T-cell (primary cell): ENCODE measurements at regions of chr7 and their contacts with region 1.

Region 1: DNA sequence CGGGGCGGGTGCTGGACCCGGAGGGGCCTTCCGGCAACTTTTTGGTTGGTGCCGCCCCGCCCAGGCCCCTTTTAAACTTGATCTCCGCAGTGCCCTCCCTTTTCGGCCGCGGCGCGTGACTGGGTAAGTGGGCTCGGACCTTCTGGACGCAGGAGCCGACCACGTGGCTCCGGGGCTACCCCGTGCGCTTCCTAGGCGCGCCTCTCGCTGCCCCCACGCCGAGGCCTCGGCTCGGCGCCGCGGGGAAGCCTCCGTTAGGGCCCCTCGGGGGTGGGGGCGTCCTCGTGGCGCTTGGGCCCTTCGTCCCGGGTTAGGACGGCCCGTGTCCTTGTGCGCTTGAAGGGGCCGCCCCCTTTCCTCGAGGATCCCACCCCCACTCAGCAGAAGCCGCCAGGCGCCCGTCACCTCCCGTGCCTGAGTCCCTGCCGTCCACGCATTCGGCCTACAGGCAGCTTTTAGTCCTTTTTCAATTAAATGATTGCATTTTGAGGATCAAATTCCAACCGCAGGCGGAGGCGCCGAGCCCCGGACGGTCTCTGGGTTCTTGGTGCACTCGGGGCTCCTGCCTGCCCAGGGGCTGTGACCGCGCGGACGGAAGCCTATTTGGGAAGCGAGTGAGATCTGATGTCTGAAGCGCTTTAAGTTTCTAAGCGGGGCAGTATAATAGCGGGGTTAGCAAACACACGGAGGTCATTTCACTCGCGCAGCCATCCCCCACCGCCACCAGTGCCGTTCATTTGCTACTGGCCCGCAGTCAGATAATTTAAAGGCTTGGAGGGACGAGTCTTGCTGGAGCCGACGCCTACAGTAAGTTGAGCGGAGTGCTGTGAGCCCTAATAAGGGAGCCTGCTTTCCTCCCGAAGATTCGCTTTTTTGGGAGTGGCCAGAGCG is 31.8 kb upstream of the TOMM7 start:
- DNase-seq: peak in 33 of 35 experiments; percentile 22 to 78 (median 67)
- ATAC-seq: peak; percentile 38 to 59 (median 54)
- H3K4me3 ChIP-seq: peak overlapping the region; percentile 63 to 81
- H3K4me3 Mint-ChIP-seq: peak overlapping the region; percentile 91 to 95 (median 92)
- H3K27ac ChIP-seq: peak overlapping the region; percentile 73
- H3K27ac Mint-ChIP-seq: peak overlapping the region; percentile 84 to 90
- H3K4me1 ChIP-seq: peaks cover 4 to 25% of the 10 kb centered on the region in 2 experiments
- H3K4me1 Mint-ChIP-seq: peaks cover 20 to 24% (median 23%) of the 10 kb centered on the region in 3 donors
- H3K27me3 ChIP-seq: peaks cover 0 to 6% of the 10 kb centered on the region in 2 experiments
- H3K27me3 Mint-ChIP-seq: peaks cover 0 to 1% of the 10 kb centered on the region in 2 donors

Region 2: GRCh38 chr7:22726345-22727185 is 127.8 kb before region 1 on chr7:
- CTCF ChIA-PET with region 1: no interaction called
- POLR2A ChIA-PET with region 1: interaction called in 1 of 2 experiments, 11 read pairs
- DNase-seq: peak in 33 of 35 experiments; percentile 4 to 69 (median 28)
- ATAC-seq: peak; percentile 76 to 90 (median 80)
- H3K4me3 ChIP-seq: no peak overlapping the region
- H3K4me3 Mint-ChIP-seq: peak overlapping the region; percentile 44 to 67 (median 65)
- H3K27ac ChIP-seq: no peak overlapping the region
- H3K27ac Mint-ChIP-seq: no peak overlapping the region
- H3K4me1 ChIP-seq: peaks cover 0 to 18% of the 10 kb centered on the region in 2 experiments
- H3K4me1 Mint-ChIP-seq: peaks cover 19 to 30% (median 21%) of the 10 kb centered on the region in 3 donors
- H3K27me3 ChIP-seq: peaks cover 0 to 21% of the 10 kb centered on the region in 2 experiments
- H3K27me3 Mint-ChIP-seq: peaks cover 13 to 15% of the 10 kb centered on the region in 2 donors

Region 3: GRCh38 chr7:23000597-23001360 is 146.4 kb after region 1 on chr7:
- CTCF ChIA-PET with region 1: no interaction called
- POLR2A ChIA-PET with region 1: interaction called in 1 of 2 experiments, 11 read pairs
- DNase-seq: no peak
- ATAC-seq: no peak
- H3K4me3 ChIP-seq: no peak overlapping the region
- H3K4me3 Mint-ChIP-seq: no peak overlapping the region
- H3K27ac ChIP-seq: no peak overlapping the region
- H3K27ac Mint-ChIP-seq: no peak overlapping the region
- H3K4me1 ChIP-seq: peaks cover 0 to 2% of the 10 kb centered on the region in 2 experiments
- H3K4me1 Mint-ChIP-seq: peaks cover 18 to 39% (median 25%) of the 10 kb centered on the region in 3 donors
- H3K27me3 ChIP-seq: no peaks in the 10 kb centered on the region
- H3K27me3 Mint-ChIP-seq: no peaks in the 10 kb centered on the region

Region 4: DNA sequence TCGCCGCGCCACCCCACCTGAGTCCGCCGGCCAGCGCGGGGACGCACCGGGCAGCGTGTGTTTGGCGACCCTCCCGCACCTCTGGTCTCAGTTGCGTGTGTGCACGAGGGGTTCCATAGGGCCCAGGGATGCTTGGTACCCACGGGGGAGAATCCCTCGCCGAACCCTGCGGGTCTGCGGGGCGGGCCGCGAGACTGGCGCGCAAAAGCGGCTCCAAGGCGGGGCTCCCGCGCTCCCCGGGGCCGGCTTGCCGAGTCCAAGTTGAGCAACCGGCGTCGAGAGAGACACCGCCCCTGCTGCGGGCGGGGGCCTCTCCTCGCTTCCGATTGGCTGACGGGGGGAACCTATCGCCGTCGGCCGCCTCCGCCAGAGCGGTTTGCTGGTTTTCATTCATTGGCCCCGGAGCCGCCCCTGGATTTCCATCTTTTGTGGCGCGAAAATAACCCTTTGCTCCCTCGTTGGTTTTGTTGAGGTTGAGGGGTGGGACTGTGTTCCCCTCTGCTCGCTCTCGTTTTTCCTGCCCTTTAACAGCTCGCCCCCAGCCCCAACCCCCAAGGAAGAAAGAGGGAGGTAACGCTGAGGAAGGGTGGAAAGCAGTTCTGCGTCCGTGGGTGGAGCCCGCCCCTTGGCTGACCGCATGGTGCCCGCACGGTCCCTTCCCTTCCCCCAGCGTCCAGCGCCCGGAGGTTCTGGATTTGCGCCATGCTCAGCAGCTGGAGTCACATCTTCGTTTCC is 619.9 kb after region 1 on chr7:
- CTCF ChIA-PET with region 1: no interaction called
- POLR2A ChIA-PET with region 1: no interaction called
- DNase-seq: peak in 6 of 35 experiments; percentile 12 to 52 (median 20)
- ATAC-seq: peak in 3 of 4 experiments; percentile 13 to 52 (median 50)
- H3K4me3 ChIP-seq: peak overlapping the region in 1 of 2 donors; percentile 95
- H3K4me3 Mint-ChIP-seq: peak overlapping the region in 2 of 3 donors; percentile 24 to 70
- H3K27ac ChIP-seq: no peak overlapping the region
- H3K27ac Mint-ChIP-seq: peak overlapping the region in 1 of 2 donors; percentile 75
- H3K4me1 ChIP-seq: peaks cover 28 to 40% of the 10 kb centered on the region in 2 experiments
- H3K4me1 Mint-ChIP-seq: peaks cover 24 to 27% (median 26%) of the 10 kb centered on the region in 3 donors
- H3K27me3 ChIP-seq: peaks cover 0 to 41% of the 10 kb centered on the region in 2 experiments
- H3K27me3 Mint-ChIP-seq: peaks cover 57 to 68% of the 10 kb centered on the region in 2 donors